PC-3 (cell line): ENCODE measurements at regions of chr10 and their contacts with region 1.

Region 1: GRCh38 chr10:32049113-32049512 is 7.1 kb downstream of the KIF5B start:
- DNase-seq: no peak
- ATAC-seq: no peak; the same call in 1 of the 2 replicates
- H3K4me3 ChIP-seq: no peak overlapping the region
- H3K27ac ChIP-seq: no peak overlapping the region
- H3K4me1 ChIP-seq: peaks cover 36% of the 10 kb centered on the region; the same call in 1 of the 2 replicates
- H3K27me3 ChIP-seq: no peaks in the 10 kb centered on the region
- CTCF ChIP-seq: no peak

Region 2: DNA sequence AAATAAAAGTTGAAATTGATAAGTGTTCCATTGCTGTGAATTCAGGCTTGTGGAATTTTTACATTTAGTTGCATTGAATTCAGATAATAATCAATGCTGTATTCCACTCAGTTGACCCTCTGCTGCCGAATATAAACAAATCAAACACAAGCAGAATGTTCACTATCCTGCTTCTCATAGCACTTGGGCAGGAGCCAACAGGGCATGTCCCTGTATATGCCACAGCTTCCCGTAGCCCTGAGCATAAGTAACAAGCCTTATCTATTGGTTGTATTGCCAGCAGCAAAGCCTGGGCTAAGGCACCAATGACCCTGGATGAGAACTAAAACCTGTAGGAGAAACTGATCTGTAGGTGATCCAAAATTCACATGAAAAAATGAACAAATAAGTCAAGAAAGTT is 266.4 kb before region 1 on chr10:
- CTCF ChIA-PET with region 1: no interaction called
- POLR2A ChIA-PET with region 1: no interaction called
- intact Hi-C with region 1: no loop called
- DNase-seq: no peak
- ATAC-seq: no peak
- H3K4me3 ChIP-seq: no peak overlapping the region
- H3K27ac ChIP-seq: no peak overlapping the region
- H3K4me1 ChIP-seq: no peaks in the 10 kb centered on the region
- H3K27me3 ChIP-seq: no peaks in the 10 kb centered on the region
- CTCF ChIP-seq: no peak

Region 3: DNA sequence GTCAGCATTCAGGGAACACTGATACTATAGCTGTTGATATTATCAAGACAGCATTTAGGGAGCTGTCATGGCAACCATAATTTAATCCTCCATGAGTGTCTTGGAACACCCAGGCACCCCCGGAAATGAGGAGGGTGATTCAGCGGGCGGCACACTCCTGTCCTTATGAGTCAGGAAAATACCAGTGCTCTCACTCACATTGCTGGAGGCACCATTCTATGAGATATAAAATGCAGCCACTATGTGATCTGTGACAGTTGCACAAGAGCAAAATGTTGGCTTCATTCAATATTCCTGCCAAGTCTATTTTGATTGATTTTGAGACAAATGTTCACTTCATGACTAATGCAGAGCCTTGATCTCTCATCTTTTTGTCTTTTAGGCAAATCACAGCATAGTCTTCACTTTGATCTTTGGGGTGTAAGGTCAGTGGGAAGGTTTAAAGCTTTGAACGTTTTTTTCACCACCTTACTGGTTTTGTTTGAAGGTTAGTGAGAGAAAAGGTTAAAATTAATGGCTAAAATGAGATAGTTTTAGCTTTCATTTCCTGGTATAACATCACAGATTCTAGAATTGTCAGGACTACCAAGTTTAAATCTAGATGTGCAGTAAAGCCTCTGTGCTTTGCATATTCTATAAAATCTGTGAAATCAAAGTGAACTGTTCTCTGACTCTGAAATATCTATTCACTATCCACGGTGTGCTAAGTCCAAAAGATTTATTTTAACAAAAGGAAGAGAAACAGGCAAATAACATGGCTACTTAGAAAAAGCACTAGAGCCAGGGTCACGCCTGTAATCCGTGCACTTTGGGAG is 108.1 kb before region 1 on chr10:
- CTCF ChIA-PET with region 1: no interaction called
- POLR2A ChIA-PET with region 1: no interaction called
- intact Hi-C with region 1: no loop called
- DNase-seq: peak; percentile 98
- ATAC-seq: peak; percentile 79
- H3K4me3 ChIP-seq: peak overlapping the region; percentile 29; the same call in 1 of the 2 replicates
- H3K27ac ChIP-seq: peak overlapping the region; percentile 94
- H3K4me1 ChIP-seq: peaks cover 76% of the 10 kb centered on the region
- H3K27me3 ChIP-seq: no peaks in the 10 kb centered on the region
- CTCF ChIP-seq: no peak

Region 4: GRCh38 chr10:32112055-32112454 is 62.9 kb after region 1 on chr10:
- CTCF ChIA-PET with region 1: no interaction called
- POLR2A ChIA-PET with region 1: interaction called, 25 read pairs
- intact Hi-C with region 1: no loop called
- DNase-seq: peak; percentile 82
- ATAC-seq: peak; percentile 97
- H3K4me3 ChIP-seq: no peak overlapping the region
- H3K27ac ChIP-seq: no peak overlapping the region
- H3K4me1 ChIP-seq: peaks cover 9% of the 10 kb centered on the region
- H3K27me3 ChIP-seq: no peaks in the 10 kb centered on the region
- CTCF ChIP-seq: no peak